Dendritic cell treated with granulocyte-macrophage colony-stimulating factor and Interleukin-4, amounts not matched to agents 40 ng/mL and 50 ng/mL, for 4 days (primary cell): ENCODE measurements at regions of chr9 and their contacts with region 1.

Region 1: GRCh38 chr9:124216567-124217176 is 41.1 kb upstream of the NEK6 start:
- H3K4me3 Mint-ChIP-seq: peak overlapping the region; percentile 51
- H3K27ac Mint-ChIP-seq: peak overlapping the region; percentile 84
- H3K4me1 Mint-ChIP-seq: peaks cover 92% of the 10 kb centered on the region
- H3K27me3 Mint-ChIP-seq: no peaks in the 10 kb centered on the region

Region 2: DNA sequence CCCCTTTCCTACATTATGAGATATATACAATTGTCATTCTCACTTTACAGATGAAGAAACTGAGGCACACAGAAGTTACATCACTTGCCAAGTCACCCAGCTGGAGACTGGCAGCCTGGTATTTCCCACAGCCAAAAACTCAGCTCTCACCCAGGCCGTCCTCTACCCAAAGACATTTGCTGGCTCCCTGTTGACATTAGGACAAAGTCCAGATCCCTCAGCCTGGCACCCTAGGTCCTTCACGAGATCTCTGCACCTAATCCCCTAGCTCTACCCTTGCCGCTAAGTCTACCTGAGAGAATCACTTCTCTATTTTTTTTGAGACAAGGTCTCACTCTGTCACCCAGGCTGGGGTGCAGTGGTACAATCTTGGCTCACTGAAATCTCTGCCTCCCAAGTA is 231.9 kb before region 1 on chr9:
- intact Hi-C with region 1: no loop called
- H3K4me3 Mint-ChIP-seq: no peak overlapping the region
- H3K27ac Mint-ChIP-seq: no peak overlapping the region
- H3K4me1 Mint-ChIP-seq: peaks cover 9% of the 10 kb centered on the region
- H3K27me3 Mint-ChIP-seq: peaks cover 79% of the 10 kb centered on the region

Region 3: DNA sequence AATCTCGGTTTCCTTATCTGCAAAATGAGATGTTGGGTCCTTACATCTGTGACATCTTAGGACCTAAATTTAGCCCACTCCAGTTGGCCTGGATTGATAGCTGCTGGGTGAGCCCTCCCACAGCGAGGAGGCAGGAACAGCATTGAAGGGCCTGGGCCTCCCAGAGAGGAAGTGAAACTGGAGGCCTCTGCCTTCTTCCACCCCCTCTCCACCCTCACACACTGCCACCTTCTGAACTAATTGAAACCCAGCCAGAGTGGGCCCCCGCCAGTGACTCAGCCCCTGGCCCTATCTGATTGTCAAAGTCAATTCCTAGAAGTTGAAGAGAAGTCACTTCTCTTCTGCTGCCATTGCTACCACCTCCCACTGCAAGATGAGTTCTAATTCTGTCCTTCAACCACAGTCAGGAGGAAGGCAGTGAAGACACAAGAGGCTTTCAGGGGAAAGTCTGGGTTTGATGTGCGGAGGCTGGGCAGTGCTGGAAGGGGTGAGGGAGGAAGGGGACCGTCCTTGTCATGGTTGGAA is 14.2 kb before region 1 on chr9:
- intact Hi-C with region 1: loop called (anchors 2 kb)
- H3K4me3 Mint-ChIP-seq: peak overlapping the region; percentile 79
- H3K27ac Mint-ChIP-seq: peak overlapping the region; percentile 90
- H3K4me1 Mint-ChIP-seq: peaks cover 98% of the 10 kb centered on the region
- H3K27me3 Mint-ChIP-seq: no peaks in the 10 kb centered on the region

Region 4: DNA sequence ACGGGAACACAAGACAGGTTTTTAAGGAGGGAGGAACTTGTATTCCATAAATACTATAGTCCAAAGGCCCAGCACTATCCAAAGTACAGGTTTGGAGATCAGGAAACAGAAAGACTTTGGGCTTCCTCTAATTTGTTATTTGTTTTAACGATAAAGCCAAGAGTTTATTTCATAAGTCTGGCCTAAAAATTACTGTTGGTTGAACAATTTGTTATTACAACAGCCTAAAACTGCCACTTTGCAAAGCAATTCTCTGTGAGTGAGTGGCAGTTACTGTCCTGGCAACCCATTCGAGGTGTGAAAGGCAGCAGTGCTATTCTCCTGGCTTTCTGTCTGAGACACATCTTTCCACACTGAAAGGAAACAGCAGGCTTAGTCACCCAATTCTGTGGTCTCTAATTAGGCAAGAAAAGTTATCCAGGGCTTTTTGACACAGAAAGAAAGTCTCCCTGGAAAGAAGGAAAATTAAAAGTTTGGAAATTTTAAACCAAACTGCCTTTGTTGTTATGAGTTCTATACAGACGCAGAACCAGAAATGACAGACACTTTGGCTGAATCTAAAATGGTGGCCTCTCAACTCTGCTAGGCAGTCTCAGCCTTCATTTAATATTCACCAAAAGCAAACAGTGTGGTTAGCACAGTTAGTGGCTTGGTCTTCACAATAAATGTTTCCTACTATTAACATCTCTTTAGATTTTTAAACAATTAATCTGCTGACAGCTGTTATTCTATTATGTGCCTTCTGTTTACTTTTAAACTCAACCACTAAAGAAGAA is 164.7 kb after region 1 on chr9:
- intact Hi-C with region 1: no loop called
- H3K4me3 Mint-ChIP-seq: no peak overlapping the region
- H3K27ac Mint-ChIP-seq: no peak overlapping the region
- H3K4me1 Mint-ChIP-seq: peaks cover 34% of the 10 kb centered on the region
- H3K27me3 Mint-ChIP-seq: no peaks in the 10 kb centered on the region

Region 5: GRCh38 chr9:125061391-125061790 is 844.7 kb after region 1 on chr9:
- intact Hi-C with region 1: no loop called
- H3K4me3 Mint-ChIP-seq: no peak overlapping the region
- H3K27ac Mint-ChIP-seq: no peak overlapping the region
- H3K4me1 Mint-ChIP-seq: no peaks in the 10 kb centered on the region
- H3K27me3 Mint-ChIP-seq: no peaks in the 10 kb centered on the region